ENCODE measurements at regions of chr14 and their contacts with region 1.

Region 1: GRCh38 chr14:100067971-100068959 is 3.0 kb downstream of the EVL start:
- DNase-seq: peak; percentile 60
- ATAC-seq: peak; percentile 47
- H3K4me3 Mint-ChIP-seq: peak overlapping the region; percentile 94
- H3K27ac Mint-ChIP-seq: peak overlapping the region; percentile 98
- H3K4me1 Mint-ChIP-seq: peaks cover 95% of the 10 kb centered on the region
- H3K27me3 Mint-ChIP-seq: no peaks in the 10 kb centered on the region
- CTCF ChIP-seq: no peak

Region 2: DNA sequence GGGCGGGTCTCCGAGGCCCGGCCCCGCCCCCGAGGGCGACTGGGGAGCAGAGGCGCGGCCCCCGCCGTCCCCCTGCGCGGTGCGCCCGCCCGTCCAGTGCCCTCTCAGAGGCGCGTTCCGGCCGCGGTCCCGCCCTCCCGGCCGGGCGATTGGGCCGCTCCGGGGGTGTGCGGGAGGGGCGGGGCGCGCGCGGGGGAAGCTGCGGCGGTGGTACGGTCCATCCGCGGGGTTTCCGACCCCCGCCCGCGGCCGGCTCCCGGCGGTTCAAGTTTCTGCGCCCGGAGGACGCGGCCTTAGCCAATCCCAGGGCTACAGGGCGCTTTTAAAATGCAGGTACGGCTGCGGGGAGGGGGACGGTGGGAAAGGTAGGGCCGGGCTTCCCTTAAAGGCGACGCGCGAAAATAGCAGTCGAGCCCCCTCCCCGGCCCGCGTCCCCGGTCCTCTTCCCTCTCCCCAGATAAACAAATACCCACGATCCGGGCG is 463.9 kb before region 1 on chr14:
- CTCF ChIA-PET with region 1: no interaction called
- POLR2A ChIA-PET with region 1: no interaction called
- intact Hi-C with region 1: loop called (anchors 5 kb)
- DNase-seq: peak; percentile 96
- ATAC-seq: peak; percentile 94
- H3K4me3 Mint-ChIP-seq: peak overlapping the region; percentile 88
- H3K27ac Mint-ChIP-seq: peak overlapping the region; percentile 71
- H3K4me1 Mint-ChIP-seq: peaks cover 9% of the 10 kb centered on the region
- H3K27me3 Mint-ChIP-seq: no peaks in the 10 kb centered on the region
- CTCF ChIP-seq: no peak

Region 3: GRCh38 chr14:99982537-99983250 is 85.6 kb before region 1 on chr14:
- CTCF ChIA-PET with region 1: interaction called, 5 read pairs
- POLR2A ChIA-PET with region 1: no interaction called
- intact Hi-C with region 1: loop called (anchors 2 kb)
- DNase-seq: no peak
- ATAC-seq: peak; percentile 98
- H3K4me3 Mint-ChIP-seq: no peak overlapping the region
- H3K27ac Mint-ChIP-seq: no peak overlapping the region
- H3K4me1 Mint-ChIP-seq: no peaks in the 10 kb centered on the region
- H3K27me3 Mint-ChIP-seq: no peaks in the 10 kb centered on the region
- CTCF ChIP-seq: peak; percentile 88

Region 4: DNA sequence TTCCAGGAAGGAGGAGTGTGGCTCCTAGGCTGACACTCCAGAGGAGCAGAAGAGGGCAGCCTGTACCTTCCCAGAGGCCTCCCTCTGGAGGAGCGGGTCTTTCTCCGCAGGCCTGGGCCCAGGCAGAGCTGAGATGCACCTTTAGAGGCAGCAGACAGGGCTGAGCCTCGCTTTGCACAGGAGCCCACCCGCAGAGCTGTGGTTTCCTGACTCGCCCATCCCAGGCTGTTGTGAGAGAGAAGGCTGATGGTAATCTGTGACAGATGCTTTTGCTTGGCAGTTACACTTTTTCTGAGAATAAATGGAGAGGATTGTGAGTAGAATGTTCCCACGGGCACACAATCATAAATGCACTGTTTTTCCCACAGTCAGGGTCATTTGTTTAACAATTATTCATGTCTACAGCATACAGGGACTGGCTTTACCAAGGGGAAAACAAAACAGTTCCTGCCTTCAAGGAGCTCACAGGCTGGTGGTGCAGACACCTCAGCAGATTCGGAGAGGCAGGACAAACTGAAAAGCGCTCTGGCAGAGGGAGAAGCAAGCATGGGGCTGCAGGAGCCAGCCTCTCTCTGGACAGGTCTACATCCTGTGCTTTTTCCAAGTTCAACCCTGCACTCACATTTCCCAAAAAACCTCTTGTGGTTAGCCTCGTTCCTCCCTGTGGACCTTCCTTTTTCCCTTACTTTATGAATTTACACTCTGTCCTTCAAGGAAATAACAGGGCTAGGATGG is 10.9 kb after region 1 on chr14:
- CTCF ChIA-PET with region 1: interaction called, 22 read pairs
- POLR2A ChIA-PET with region 1: interaction called, 56 read pairs
- intact Hi-C with region 1: no loop called
- DNase-seq: no peak
- ATAC-seq: peak; percentile 60
- H3K4me3 Mint-ChIP-seq: peak overlapping the region; percentile 49
- H3K27ac Mint-ChIP-seq: peak overlapping the region; percentile 80
- H3K4me1 Mint-ChIP-seq: peaks cover 93% of the 10 kb centered on the region
- H3K27me3 Mint-ChIP-seq: no peaks in the 10 kb centered on the region
- CTCF ChIP-seq: no peak

Region 5: DNA sequence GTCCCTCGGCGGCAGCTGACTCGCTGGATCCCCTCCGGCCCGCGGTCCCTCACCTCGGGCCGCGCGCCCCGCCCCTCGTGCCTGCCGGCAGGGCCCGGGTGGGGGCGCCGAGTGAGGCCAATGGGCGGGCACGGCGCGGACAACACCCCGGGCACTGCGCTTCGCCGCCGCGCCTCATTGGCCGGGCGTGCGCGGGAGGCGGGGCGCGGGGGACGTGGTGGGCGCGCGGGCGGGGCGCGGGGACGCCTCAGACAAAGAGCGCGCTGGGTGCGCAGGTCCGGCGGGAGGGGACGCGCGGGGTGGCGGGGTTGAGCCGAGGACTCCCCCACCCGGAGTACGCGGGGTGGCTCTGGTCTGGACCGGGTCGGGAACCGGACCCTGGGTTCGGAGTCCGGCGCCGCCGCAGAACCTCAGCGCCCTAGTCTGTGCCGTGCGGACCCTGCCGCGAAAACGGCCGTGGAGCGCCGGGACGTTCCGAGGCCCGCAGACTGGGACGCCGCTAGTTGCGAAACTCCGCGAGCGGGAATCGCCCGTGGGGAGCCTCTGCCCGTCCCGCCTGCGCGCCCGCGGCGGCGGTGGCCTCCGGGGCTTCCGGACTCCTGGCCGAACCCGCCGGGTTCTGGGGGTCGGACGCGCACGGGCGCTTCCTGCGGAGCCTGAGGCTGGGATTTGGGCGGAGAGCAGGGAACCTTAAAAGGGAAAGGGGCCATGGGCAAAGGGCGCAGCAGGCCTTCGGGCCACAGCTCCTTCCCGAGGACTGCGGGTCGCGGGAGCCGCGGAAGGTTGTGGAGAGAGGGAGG is 238.4 kb after region 1 on chr14 and contains the start of gene SLC25A29:
- CTCF ChIA-PET with region 1: no interaction called
- POLR2A ChIA-PET with region 1: interaction called, 3 read pairs
- intact Hi-C with region 1: loop called (anchors 5 kb)
- DNase-seq: peak; percentile 86
- ATAC-seq: peak; percentile 93
- H3K4me3 Mint-ChIP-seq: peak within 1 kb of the TSS; percentile 87
- H3K27ac Mint-ChIP-seq: peak within 1 kb of the TSS; percentile 66
- H3K4me1 Mint-ChIP-seq: peaks cover 21% of the 10 kb centered on the region
- H3K27me3 Mint-ChIP-seq: no peaks in the 10 kb centered on the region
- CTCF ChIP-seq: no peak
- total RNA-seq, gene SLC25A29: 20.6 and 28.8 TPM in 2 replicates